Caco-2 (cell line): ENCODE measurements at regions of chr12 and their contacts with region 1.

Region 1: GRCh38 chr12:64256166-64256800 is 34.2 kb upstream of the KICS2 start:
- DNase-seq: peak in 1 of 2 experiments; percentile 64
- H3K4me3 ChIP-seq: no peak overlapping the region
- H3K4me3 Mint-ChIP-seq: no peak overlapping the region
- H3K27ac Mint-ChIP-seq: no peak overlapping the region
- H3K4me1 ChIP-seq: no peaks in the 10 kb centered on the region
- H3K4me1 Mint-ChIP-seq: no peaks in the 10 kb centered on the region
- H3K27me3 ChIP-seq: no peaks in the 10 kb centered on the region
- H3K27me3 Mint-ChIP-seq: no peaks in the 10 kb centered on the region
- CTCF ChIP-seq: peak; percentile 58 to 67

Region 2: DNA sequence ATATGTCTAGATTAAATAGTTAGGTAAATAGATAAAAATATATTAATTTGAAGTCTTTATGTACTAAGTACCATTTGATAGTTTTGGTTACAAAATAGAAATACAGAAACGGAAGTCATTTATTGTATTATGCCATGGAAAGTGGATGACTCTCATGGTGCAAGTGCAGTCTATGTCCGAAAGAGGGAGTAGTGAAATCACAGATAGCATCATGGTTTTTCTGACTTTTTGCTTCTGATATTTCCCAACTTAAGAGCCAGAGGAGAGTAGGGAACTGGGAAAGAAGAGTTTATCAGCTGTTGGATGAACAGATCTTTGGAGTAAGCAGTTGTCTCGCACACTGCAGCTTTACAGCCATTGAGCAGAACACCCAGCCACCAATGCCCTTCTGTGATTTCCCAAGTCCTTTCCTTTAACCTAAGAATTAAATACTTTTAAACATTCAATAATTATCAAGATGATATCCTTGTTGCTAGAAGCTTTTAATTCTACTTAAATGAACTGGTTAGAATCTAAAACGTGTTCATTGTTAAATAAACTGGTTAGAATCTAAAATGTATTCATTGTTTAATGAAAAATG is 430.2 kb before region 1 on chr12:
- CTCF ChIA-PET with region 1: no interaction called
- POLR2A ChIA-PET with region 1: no interaction called
- intact Hi-C with region 1: loop called (anchors 1 kb)
- DNase-seq: peak in 1 of 2 experiments; percentile 35
- H3K4me3 ChIP-seq: no peak overlapping the region
- H3K4me3 Mint-ChIP-seq: no peak overlapping the region
- H3K27ac Mint-ChIP-seq: no peak overlapping the region
- H3K4me1 ChIP-seq: peaks cover 10% of the 10 kb centered on the region
- H3K4me1 Mint-ChIP-seq: peaks cover 9% of the 10 kb centered on the region
- H3K27me3 ChIP-seq: no peaks in the 10 kb centered on the region
- H3K27me3 Mint-ChIP-seq: no peaks in the 10 kb centered on the region
- CTCF ChIP-seq: peak; percentile 68 to 79

Region 3: DNA sequence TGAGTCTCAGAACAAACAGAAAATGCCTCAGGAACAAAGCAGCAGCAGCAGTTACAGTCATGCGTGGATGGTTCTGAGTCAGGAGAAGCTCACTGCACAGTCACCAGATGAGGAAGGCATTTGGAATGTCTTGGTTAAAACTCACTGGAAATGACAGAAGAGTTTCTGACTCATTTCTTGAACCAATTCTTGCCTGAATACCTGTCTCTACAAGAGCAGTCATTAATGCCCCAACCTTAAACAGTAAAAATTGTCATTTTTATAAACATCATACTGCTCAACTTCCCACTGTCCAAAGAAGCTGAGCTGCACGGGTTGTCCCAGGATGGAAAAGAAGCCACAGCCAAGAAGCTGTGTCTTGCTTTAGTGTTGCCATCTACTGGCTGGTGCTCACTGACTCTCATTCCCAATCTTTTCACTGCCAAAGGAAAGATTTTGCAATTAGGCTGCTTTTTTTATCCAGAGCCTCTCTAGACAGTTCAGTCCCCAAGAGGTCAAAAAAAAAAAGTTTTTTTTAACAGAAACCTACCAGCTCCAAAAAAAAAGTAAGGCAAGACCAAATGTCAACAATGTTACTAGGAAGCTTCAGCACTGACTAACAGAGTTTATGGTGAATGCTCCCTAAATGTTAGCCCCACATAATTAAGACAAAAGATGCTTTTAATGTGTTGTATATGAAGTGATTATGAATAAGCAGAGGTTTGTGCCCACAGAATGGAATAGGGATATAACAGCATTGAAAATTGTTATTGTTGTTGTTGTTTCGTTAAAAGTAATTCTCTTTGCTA is 74.6 kb before region 1 on chr12:
- CTCF ChIA-PET with region 1: no interaction called
- POLR2A ChIA-PET with region 1: no interaction called
- intact Hi-C with region 1: loop called (anchors 5 kb)
- DNase-seq: peak; percentile 53 to 58
- H3K4me3 ChIP-seq: no peak overlapping the region
- H3K4me3 Mint-ChIP-seq: no peak overlapping the region
- H3K27ac Mint-ChIP-seq: peak overlapping the region; percentile 55
- H3K4me1 ChIP-seq: peaks cover 35% of the 10 kb centered on the region
- H3K4me1 Mint-ChIP-seq: peaks cover 34% of the 10 kb centered on the region
- H3K27me3 ChIP-seq: no peaks in the 10 kb centered on the region
- H3K27me3 Mint-ChIP-seq: no peaks in the 10 kb centered on the region
- CTCF ChIP-seq: peak; percentile 59 to 67